ENCODE measurements at regions of chr5 and their contacts with region 1.

Region 1: DNA sequence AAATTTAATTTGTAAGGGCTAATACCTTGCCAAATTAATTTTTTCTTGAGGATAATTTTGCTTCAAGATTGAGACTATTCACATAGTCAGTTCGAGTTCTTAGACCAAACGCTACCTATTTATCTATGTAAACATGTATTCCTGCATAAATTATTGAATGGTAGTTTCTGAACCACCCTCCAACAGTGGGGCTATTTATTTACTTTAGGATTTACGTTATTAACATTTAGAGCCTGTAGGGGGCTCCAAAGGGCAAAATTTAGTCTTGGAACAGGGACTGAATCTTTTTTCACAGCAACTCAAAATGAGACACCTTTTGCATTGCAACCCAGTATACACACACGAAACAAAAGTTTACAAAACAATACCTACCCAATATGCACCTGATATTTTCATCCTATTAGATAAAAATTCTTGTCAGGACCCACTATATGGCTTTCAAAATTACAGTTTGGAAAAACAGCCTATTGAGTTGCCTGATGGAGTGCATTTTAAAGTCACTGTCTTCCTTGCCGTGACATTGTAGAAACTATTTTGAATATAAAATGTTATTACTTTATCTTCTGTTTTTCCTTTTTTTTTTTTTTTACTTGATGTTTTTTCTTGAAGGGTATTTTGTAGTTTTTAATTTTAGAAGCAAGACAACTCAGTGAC is 47.1 kb upstream of the POU4F3 start:
- DNase-seq: no peak

Region 2: GRCh38 chr5:146007270-146007669 is 284.3 kb before region 1 on chr5:
- intact Hi-C with region 1: no loop called
- DNase-seq: no peak

Region 3: GRCh38 chr5:146425023-146425422 is 133.5 kb after region 1 on chr5:
- intact Hi-C with region 1: loop called (anchors 2 kb)
- DNase-seq: no peak

Measured in cardiac septum (tissue), 1 donor.